Calu3 (cell line): ENCODE measurements at regions of chr12 and their contacts with region 1.

Region 1: DNA sequence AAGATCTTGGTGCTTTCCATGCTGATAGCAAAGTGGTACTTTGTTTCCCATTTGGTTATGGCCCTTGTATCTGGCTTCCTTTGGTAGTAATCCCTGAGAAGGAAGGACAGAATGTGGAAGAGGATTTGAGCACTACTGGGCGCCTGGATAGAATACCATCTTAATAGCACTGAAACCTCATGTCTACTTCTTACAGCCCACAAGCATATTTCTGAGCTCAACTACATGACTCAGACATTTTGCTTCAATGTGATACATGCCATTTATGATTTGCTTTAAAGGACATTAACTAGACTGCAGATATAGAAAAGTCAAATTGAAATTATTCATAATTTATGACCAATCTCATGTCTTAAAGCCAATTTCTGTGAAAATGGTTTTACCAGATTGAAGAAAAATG is 80.4 kb downstream of the LIN7A start:
- DNase-seq: no peak
- H3K4me3 Mint-ChIP-seq: no peak overlapping the region
- H3K27ac Mint-ChIP-seq: no peak overlapping the region
- H3K4me1 Mint-ChIP-seq: no peaks in the 10 kb centered on the region
- H3K27me3 Mint-ChIP-seq: no peaks in the 10 kb centered on the region
- CTCF ChIP-seq: no peak

Region 2: DNA sequence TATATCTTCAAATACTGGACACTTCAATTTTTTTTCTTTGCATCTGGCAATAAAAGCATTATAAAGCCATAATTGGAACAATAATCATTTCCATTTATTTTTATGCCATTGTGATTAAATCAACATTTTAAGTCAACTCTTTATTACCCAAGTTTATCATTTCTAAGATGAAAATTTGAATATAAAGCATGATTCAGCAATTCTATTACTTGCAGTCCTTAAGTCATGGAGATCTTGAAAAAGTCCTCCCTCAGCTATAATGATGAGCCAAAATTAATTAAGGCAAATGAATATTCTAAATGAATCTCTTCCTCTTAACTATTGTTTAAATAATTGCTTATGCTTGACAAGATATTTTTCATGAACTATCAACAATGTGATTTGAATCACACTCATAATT is 14.7 kb after region 1 on chr12:
- CTCF ChIA-PET with region 1: interaction called, 22 read pairs
- intact Hi-C with region 1: no loop called
- DNase-seq: no peak
- H3K4me3 Mint-ChIP-seq: no peak overlapping the region
- H3K27ac Mint-ChIP-seq: no peak overlapping the region
- H3K4me1 Mint-ChIP-seq: no peaks in the 10 kb centered on the region
- H3K27me3 Mint-ChIP-seq: no peaks in the 10 kb centered on the region
- CTCF ChIP-seq: no peak